ENCODE measurements at regions of chr2 and their contacts with region 1.

Region 1: GRCh38 chr2:112958428-112959108 is 19.2 kb upstream of the IL36G start:
- DNase-seq: peak; percentile 74
- H3K4me3 ChIP-seq: no peak overlapping the region
- H3K27ac ChIP-seq: no peak overlapping the region
- H3K4me1 ChIP-seq: no peaks in the 10 kb centered on the region
- H3K27me3 ChIP-seq: peaks cover 0 to 6% (median 0%) of the 10 kb centered on the region in 4 donors
- CTCF ChIP-seq: peak; percentile 44 to 81 (median 48)
- EP300 ChIP-seq: no peak
- POLR2A ChIP-seq: no peak

Region 2: GRCh38 chr2:112606488-112606902 is 352.1 kb before region 1 on chr2:
- intact Hi-C with region 1: loop called (anchors 10 kb)
- DNase-seq: no peak
- H3K4me3 ChIP-seq: no peak overlapping the region
- H3K27ac ChIP-seq: no peak overlapping the region
- H3K4me1 ChIP-seq: no peaks in the 10 kb centered on the region
- H3K27me3 ChIP-seq: no peaks in the 10 kb centered on the region
- CTCF ChIP-seq: no peak
- EP300 ChIP-seq: no peak
- POLR2A ChIP-seq: no peak

Region 3: DNA sequence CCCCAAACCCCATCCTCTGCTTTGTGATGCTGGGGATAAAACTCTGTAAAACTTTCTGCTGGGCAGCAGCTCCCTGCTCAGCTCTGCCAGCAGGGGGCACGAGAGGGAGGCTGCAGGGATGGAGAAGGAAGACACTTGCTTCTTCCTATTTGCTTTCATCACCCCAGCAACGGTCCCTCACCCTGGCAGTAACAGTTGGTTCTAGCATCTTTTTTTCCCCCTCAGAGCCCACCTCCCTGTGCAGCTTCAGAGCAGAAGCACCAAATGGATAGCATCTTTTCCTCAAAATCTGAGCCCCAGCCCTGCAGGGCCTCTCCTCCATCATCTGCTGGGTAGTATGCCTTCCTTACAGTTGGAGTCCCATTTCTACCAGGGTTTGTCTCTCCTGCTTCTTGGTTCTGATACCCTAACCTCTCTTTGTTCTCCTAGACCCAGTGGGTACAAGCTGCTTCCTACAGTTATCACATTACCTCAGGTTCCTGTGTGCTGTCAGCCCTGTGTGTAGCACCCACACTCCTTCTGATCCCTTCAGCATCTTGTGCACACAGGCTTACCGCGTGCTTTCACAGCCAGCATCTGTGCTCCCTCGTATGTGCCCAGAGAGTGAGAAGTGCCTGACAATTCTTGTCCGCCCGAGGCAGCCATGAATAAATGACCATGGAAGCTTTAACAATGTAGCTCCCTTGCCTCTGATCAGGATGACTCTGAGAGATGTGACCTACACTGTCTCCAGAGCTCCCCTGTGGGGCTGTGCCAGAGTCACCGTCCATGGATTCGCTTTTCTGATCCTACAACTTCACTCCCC is 208.6 kb before region 1 on chr2:
- intact Hi-C with region 1: loop called (anchors 5 kb)
- DNase-seq: no peak
- H3K4me3 ChIP-seq: no peak overlapping the region
- H3K27ac ChIP-seq: peak overlapping the region in 1 of 4 donors; percentile 0
- H3K4me1 ChIP-seq: peaks cover 0 to 37% (median 26%) of the 10 kb centered on the region in 4 donors
- H3K27me3 ChIP-seq: no peaks in the 10 kb centered on the region
- CTCF ChIP-seq: peak in 2 of 3 experiments; percentile 81 to 92
- EP300 ChIP-seq: no peak
- POLR2A ChIP-seq: no peak